ENCODE measurements at regions of chr16 and their contacts with region 1.

Region 1: GRCh38 chr16:84925092-84925772 is 86.1 kb downstream of the ZDHHC7 start:
- DNase-seq: peak; percentile 55
- ATAC-seq: peak; percentile 57
- H3K4me3 ChIP-seq: no peak overlapping the region
- H3K27ac ChIP-seq: no peak overlapping the region
- H3K4me1 ChIP-seq: peaks cover 10% of the 10 kb centered on the region
- H3K27me3 ChIP-seq: no peaks in the 10 kb centered on the region
- CTCF ChIP-seq: peak; percentile 92

Region 2: GRCh38 chr16:84754353-84754856 is 170.8 kb before region 1 on chr16:
- CTCF ChIA-PET with region 1: interaction called, 6 read pairs
- POLR2A ChIA-PET with region 1: no interaction called
- intact Hi-C with region 1: loop called (anchors 1 kb)
- DNase-seq: peak; percentile 87
- ATAC-seq: peak; percentile 85
- H3K4me3 ChIP-seq: no peak overlapping the region
- H3K27ac ChIP-seq: no peak overlapping the region
- H3K4me1 ChIP-seq: peaks cover 11% of the 10 kb centered on the region
- H3K27me3 ChIP-seq: no peaks in the 10 kb centered on the region
- CTCF ChIP-seq: peak; percentile 76

Region 3: GRCh38 chr16:84952335-84953189 is 27.3 kb after region 1 on chr16:
- CTCF ChIA-PET with region 1: interaction called, 5 read pairs
- POLR2A ChIA-PET with region 1: no interaction called
- intact Hi-C with region 1: loop called (anchors 1 kb)
- DNase-seq: peak; percentile 85
- ATAC-seq: peak; percentile 96
- H3K4me3 ChIP-seq: no peak overlapping the region
- H3K27ac ChIP-seq: no peak overlapping the region
- H3K4me1 ChIP-seq: no peaks in the 10 kb centered on the region
- H3K27me3 ChIP-seq: no peaks in the 10 kb centered on the region
- CTCF ChIP-seq: peak; percentile 70

Region 4: DNA sequence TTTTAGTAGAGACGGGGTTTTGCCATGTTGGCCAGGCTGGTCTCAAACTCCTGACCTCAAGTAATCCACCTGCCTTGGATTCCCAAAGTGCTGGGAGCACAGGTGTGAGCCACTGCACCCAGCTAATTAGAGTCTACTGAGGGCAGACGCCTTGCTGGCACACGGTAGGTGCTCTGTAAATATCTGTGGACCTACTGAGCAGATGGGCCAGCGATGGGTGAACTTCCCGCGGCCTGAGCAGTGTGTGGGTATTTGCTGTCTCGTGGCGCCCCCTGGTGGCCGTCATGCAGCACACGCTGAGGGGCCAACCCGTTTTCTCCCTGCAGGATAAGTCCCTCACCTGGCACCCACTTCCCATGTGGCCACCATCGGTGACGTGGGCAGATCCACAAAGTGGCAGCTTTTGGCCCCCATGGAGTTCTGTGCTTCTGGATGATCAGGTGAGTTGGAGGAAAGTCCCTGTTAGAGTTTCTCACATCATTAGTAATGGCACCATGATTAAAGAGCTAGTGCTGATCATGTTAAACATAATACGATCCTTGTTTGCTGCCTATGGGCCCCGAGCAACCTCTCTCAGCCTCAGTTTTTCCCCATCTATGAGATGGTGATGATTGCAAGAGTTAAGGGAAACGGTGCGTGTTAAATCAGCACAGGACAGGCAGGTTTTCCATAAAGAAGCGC is 45.4 kb after region 1 on chr16:
- CTCF ChIA-PET with region 1: no interaction called
- POLR2A ChIA-PET with region 1: no interaction called
- intact Hi-C with region 1: loop called (anchors 1 kb)
- DNase-seq: peak; percentile 73
- ATAC-seq: peak; percentile 93
- H3K4me3 ChIP-seq: no peak overlapping the region
- H3K27ac ChIP-seq: no peak overlapping the region
- H3K4me1 ChIP-seq: peaks cover 10% of the 10 kb centered on the region
- H3K27me3 ChIP-seq: no peaks in the 10 kb centered on the region
- CTCF ChIP-seq: peak; percentile 85

Region 5: DNA sequence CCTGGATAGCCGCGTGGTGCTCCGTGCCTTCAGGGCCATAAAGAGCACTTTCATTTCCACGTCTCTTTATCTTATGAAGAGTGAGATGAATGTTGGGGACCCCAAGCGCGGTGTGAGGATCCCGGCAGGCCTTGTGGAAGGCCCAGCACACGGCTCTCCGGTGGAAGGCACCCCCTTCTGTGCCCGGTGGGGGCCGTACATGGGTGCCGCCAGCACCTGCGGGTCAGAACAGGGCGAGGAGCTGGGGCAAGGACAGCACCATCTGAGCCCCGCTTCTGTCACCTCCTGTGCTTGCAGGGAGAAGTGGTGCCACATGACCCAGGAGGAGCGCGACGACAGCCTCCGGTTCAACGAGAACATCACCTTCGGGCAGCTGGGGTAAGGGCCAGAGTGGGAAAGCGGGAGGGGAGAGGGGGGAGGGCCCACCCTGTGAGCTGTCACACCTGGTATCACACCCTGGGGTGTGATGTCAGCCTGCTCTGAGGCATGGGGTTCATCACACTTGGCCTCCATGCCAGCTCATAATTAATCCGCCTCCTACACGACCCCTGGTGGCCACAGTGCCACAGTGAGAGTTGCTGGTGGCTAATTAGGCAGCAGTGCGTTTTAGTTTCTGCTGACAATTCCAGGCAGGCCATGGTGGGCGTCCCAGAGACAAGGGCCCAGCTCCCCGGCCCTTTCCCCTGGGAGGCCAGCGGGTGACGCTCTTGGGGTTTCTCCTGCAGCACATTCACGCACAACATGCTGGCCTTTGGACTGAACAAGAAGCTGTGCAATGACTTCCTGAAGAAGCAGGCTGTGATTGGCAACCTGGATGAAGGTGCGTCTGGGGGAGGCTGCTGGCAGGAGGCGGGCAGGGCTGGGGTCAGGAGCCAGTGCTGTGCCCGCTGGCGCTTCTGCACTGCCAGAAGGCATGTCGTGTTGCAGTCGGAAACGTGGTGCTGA is 161.4 kb after region 1 on chr16:
- CTCF ChIA-PET with region 1: no interaction called
- POLR2A ChIA-PET with region 1: no interaction called
- intact Hi-C with region 1: loop called (anchors 2 kb)
- DNase-seq: peak; percentile 64
- ATAC-seq: peak; percentile 81
- H3K4me3 ChIP-seq: no peak overlapping the region
- H3K27ac ChIP-seq: no peak overlapping the region
- H3K4me1 ChIP-seq: no peaks in the 10 kb centered on the region
- H3K27me3 ChIP-seq: no peaks in the 10 kb centered on the region
- CTCF ChIP-seq: peak; percentile 63

Measured in PC-3 (cell line).